Activated T-helper 2 cell treated with anti-CD3 and anti-CD28 coated beads, Interferon-gamma antibody, Interleukin-2, Interleukin-4, amounts not matched to agents 10 μg/mL and 5 μg/mL and 100 μg/mL, durations not matched to agents 14 hours and 24 hours and 36 hours (primary cell): ENCODE measurements at regions of chr4 and their contacts with region 1.

Region 1: DNA sequence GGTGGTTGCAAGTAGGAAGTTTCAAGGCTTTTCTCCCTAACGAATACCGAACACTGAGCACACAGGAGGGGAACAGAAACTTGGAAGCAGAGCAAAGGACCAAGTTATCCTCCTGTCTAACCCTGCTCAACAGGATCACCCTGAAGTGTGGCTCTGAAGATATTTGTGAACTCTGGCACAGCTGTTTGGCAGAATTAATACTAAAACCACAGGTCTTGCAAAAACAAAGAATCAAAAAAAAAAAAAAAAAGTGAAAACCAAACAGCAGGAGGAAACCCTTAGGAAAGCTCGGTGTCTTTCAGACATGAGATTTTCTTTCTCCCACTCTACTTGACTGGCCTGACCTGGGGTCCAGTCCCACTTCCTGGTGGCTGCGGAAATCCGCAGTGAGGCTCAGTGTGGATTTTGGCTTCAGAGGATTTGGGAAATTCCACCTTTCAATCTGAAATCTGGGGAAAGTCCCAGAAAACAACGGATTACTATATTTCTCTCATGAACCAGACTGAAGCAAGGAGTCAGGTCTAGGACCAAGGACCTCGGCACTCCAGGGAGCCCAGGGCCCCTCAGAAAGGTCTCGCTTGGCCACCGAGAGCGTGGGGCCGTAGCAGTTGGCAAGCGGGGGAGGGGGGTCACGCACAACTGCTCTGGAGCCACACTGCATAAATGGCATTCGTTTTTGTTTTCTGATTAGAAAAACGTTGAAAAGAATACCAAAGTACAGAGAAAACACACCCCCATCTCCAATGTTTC is 867 bp downstream of the TIFA start:
- DNase-seq: no peak
- H3K4me3 Mint-ChIP-seq: peak overlapping the region; percentile 86
- H3K27ac Mint-ChIP-seq: peak overlapping the region; percentile 78
- H3K4me1 Mint-ChIP-seq: peaks cover 63% of the 10 kb centered on the region
- H3K27me3 Mint-ChIP-seq: no peaks in the 10 kb centered on the region

Region 2: DNA sequence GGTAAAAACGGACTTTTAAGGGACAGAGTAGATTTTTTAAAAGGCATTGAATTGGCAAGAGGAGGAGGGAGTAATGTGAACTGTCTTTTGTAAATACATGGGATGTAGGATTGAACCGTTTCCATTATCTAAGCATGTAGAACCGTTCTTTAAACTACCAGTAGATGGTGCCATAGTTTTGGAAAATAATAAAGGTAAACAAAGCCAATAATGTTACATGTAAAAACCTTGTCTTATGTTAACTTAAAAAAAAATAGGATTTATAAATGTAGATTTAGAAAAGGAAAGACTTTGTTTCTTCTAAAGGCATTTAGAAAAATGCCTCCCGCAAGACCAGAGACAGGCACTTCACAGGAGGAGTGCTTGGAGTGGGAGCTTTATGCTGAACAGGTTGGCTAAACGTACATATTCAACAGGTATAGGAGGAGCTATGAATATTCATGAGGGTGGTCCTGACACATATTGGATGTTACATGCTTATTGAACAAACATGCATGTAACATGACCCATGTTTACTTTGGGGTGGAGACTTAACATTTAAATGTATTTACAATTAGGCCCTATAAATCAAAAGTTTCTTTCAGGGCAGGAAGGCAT is 185.0 kb before region 1 on chr4:
- intact Hi-C with region 1: loop called (anchors 5 kb)
- DNase-seq: no peak
- H3K4me3 Mint-ChIP-seq: no peak overlapping the region
- H3K27ac Mint-ChIP-seq: no peak overlapping the region
- H3K4me1 Mint-ChIP-seq: peaks cover 5% of the 10 kb centered on the region
- H3K27me3 Mint-ChIP-seq: peaks cover 22% of the 10 kb centered on the region

Region 3: DNA sequence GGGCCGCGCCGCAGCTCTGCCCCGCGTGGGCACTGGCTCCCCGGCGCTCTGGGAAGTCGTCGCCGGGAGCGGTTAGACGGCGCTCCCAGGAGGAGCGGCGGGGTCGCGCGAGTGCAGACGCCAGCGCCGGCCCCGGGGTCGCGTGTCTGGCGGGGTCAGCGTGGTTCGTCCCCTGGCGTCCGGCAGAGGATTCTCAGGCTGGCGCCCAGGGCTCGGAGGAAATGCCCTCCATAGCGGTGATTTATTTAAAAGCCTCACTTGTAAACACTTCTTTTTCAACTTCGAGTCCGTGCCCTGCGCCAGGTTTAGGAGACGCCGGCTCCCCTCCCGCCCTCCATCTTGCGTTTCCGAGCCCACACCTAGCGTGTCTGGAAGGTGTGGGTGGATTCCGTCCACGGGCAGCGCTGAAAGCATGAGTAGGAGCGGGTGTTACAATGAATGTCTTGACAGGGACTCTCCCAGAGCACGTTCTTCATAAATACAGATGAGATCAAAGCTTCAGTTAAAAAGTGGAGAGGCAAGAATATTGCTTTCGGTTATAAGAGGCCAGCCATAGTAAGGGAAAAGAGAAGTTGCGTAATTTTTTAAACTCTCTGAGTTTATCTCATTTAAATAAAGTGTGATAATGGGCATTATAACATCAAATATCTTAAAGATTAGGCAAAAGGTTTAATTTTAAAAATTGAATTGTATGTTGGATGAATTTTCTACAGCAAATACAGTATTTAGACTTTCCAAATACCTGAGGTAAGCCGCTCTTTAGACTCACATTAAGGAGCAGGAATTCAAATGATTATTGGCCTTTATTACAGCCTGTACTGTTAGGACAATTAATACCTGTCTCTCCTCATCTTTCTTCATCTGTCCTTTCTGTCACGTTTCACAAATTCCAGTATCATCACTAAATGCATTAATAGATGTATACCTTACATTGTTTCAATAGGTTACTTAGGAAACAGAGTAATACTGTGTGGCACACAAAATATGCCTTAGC is 138.7 kb before region 1 on chr4:
- intact Hi-C with region 1: loop called (anchors 1 kb)
- DNase-seq: peak; percentile 44
- H3K4me3 Mint-ChIP-seq: peak overlapping the region; percentile 85
- H3K27ac Mint-ChIP-seq: peak overlapping the region; percentile 92
- H3K4me1 Mint-ChIP-seq: peaks cover 35% of the 10 kb centered on the region
- H3K27me3 Mint-ChIP-seq: no peaks in the 10 kb centered on the region

Region 4: DNA sequence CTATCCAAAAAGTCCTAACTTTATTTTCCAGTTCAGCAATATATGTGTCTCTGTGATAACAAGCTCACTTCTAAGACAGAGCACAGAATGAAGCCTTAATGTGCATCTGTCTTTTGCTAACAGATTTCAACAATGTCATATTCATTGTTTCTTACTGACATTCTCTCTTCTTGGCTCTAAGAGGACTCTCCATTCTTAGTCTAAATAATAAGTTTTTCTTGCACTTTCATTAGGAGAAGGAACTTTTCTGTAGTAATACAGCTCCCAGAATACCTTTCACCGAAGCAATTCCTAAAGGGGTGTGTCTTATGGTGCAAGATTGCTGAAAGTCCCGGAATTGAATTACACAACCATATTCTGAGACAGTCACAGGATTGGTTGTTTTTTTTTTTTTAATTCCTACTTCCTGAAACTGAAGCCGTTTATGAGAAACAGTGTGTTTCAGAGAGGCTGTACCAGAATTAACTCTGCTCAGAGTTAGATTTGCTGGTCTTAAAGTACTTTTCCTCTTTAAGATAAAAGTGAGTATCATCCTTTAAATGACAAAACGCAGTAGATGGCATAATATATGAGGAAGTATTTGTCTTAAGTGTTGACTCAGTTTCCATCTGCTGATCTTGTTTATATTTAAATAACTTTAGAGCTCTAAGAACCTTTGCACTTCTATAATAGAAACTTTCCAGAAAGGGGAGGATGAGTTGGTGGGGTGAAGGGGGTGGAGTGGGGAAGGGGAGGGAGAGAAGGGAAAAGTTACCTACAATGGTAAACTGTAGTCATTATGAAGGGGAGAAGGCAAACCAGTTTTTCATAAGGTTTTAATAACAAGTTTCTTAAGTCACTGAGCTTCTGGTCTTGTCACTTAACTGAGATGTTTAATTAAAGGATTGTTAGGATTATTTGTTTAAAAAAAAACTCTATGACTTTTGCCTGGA is 12.4 kb after region 1 on chr4 and contains the start of gene ALPK1:
- intact Hi-C with region 1: loop called (anchors 1 kb)
- DNase-seq: no peak
- H3K4me3 Mint-ChIP-seq: peak within 1 kb of the TSS; percentile 75
- H3K27ac Mint-ChIP-seq: peak within 1 kb of the TSS; percentile 52
- H3K4me1 Mint-ChIP-seq: peaks cover 21% of the 10 kb centered on the region
- H3K27me3 Mint-ChIP-seq: peaks cover 3% of the 10 kb centered on the region
- total RNA-seq, gene ALPK1: 2.9 and 3.8 TPM in 2 replicates

Region 5: GRCh38 chr4:112302320-112303274 is 17.8 kb after region 1 on chr4:
- intact Hi-C with region 1: loop called (anchors 1 kb)
- DNase-seq: no peak
- H3K4me3 Mint-ChIP-seq: no peak overlapping the region
- H3K27ac Mint-ChIP-seq: no peak overlapping the region
- H3K4me1 Mint-ChIP-seq: peaks cover 11% of the 10 kb centered on the region
- H3K27me3 Mint-ChIP-seq: peaks cover 7% of the 10 kb centered on the region

Region 6: DNA sequence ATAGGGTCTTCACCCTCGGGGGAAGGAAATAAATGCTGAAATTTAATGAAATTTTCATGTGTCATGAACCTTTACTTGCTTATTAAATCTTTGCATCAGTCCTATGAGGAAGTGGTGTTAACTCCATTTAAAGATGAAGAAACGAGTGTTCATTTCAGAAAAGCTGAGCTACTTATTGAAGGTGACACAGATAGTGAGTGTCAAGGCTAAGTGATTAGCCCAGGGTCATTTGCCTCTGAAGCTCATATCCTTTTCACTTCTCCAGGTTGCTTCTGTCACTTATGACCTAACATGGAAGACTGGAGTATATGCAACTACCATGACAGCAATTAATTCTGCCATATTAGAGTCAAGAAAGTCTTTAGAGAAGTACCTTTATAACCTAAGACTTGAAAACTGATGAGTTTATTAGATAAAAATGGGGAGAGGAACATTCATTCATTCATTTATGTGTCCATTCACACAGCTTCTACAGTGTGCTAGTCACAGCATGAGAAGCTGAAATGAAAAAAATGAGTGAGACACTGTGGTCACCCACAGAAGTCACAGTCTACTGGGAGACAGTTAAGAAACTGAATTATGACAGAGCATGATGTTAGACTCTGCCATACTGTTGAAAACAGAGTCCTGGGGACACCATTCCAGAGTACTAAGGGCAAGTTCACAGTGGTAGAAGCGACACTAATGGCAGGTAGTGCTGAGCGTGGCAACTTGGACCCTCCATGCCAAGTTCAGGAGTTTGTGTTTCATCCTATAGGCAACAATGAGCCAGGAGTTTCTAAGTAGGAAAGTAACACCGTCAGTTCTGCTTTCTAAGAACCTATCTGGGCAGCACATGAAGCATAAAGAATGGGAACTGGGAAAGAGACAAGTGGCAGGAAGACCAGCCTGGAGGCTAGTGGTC is 33.7 kb after region 1 on chr4:
- intact Hi-C with region 1: loop called (anchors 2 kb)
- DNase-seq: no peak
- H3K4me3 Mint-ChIP-seq: no peak overlapping the region
- H3K27ac Mint-ChIP-seq: no peak overlapping the region
- H3K4me1 Mint-ChIP-seq: peaks cover 18% of the 10 kb centered on the region
- H3K27me3 Mint-ChIP-seq: no peaks in the 10 kb centered on the region

Region 7: DNA sequence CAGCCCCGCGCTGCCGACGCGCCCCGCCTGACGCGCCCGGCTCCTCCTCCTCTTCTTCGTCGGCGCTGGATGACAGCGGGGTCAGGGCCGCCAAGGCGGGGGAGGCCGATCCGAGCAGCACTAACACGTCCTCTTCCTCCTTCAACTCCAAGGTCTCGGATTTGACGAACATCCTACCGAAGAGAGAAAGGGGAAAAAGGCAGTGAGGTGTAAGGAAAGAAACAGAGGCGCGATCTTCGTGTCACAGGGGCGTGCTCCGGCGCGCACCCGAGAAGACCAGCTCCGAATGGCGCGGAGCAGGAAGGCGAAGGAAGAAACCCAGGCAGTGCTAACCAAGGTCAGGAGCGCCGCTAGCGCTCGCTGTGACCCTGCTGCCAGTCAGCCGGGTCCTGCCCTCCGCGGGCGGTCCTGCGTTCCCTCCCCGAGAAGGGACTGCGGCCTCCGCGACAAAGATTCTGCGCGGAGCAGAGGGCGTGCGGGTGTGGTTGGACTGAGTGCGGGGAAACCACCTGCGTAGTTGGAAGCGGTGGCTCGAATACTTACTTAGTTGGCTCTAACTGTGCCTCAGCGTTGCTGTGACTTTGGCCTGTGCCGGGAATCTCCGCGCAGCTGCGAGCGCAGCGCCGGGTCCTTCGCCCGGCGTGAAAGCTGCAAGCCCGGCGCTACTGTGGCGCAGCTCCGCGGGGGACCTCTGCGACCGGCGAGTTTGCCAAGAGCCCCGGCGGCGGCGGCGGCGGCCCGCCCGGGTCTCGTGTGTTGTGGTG is 230.6 kb after region 1 on chr4:
- intact Hi-C with region 1: loop called (anchors 5 kb)
- DNase-seq: peak; percentile 44
- H3K4me3 Mint-ChIP-seq: peak overlapping the region; percentile 88
- H3K27ac Mint-ChIP-seq: peak overlapping the region; percentile 56
- H3K4me1 Mint-ChIP-seq: peaks cover 46% of the 10 kb centered on the region
- H3K27me3 Mint-ChIP-seq: peaks cover 86% of the 10 kb centered on the region